GM10248 (cell line): ENCODE measurements at regions of chr19 and their contacts with region 1.

Region 1: GRCh38 chr19:3771906-3772455 is at the start of gene RAX2:
- DNase-seq: no peak
- CTCF ChIP-seq: no peak

Region 2: GRCh38 chr19:3748965-3749364 is 23.0 kb before region 1 on chr19:
- CTCF ChIA-PET with region 1: no interaction called
- POLR2A ChIA-PET with region 1: no interaction called
- DNase-seq: no peak
- CTCF ChIP-seq: no peak

Region 3: DNA sequence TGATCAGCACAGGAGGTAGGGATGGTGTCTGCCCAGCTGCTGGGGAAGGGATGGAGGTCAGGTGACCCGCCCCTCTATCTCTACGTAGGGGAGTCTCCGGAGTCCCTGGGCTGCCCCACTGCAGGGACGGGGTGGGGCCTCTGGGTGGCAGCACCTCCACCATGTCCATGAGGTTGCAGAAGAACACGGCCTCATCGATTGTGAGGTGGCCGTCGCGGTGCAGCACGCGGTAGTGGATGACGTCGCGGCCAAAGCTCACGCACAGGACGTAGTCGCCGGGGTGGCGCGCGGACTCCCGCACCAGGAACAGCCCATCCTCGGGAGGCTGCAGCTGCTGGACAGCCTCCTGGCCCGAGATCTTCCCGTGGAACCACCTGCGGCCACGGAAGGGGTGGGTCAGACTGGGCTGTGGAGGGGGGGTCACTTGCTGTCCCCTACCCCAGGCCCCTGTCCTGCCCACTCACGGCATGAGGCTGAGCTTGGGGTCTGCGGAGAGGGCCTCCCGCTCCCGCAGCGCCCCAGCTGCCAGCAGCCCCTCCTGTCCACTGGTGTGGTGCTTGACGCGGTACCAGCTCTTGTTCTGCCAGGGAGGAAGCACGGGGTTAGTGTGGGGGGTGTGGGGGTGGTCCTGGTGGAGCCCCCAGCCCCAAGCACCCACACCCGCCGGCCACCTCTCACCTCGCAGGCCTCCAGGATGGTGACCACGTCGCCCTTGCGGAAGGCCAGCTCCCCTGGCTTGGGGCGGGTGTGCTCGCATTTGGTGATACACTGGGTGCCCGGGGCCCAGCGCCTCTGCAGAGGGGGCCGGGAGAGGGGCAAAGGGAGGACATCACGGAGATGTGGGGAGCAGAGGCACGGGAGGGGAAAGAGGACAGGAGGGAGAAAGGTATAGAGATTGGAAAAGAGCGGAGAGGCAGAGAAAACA is 11.9 kb after region 1 on chr19:
- CTCF ChIA-PET with region 1: interaction called, 3 read pairs
- POLR2A ChIA-PET with region 1: interaction called, 10 read pairs
- DNase-seq: no peak
- CTCF ChIP-seq: peak; percentile 44